ENCODE measurements at regions of chr22 and their contacts with region 1.

Region 1: DNA sequence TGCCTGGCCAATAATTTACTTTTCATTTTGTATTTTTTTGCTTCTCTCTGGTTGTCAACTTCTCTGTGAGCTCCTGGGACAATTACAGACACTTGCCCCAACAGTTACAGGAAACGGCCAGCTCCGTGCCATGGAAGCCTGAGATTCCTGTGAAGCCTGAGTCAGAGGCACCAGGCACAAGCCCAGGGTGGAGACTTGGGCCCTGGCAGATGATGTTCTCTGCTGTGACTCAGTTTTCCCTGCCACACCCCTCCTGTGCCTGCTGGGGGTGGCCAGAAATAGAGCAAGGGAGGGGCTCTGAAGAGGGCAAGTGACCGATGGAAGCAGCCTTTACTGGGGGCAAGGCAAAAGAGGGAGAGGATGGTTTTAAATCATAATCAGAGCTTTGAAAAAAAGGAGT is 4.9 kb downstream of the ATP5MGL start:
- DNase-seq: no peak
- H3K4me3 ChIP-seq: no peak overlapping the region
- H3K27ac ChIP-seq: peak overlapping the region; percentile 65
- H3K27me3 ChIP-seq: no peaks in the 10 kb centered on the region
- CTCF ChIP-seq: no peak

Region 2: GRCh38 chr22:42511401-42511891 is 124.1 kb before region 1 on chr22:
- CTCF ChIA-PET with region 1: no interaction called
- POLR2A ChIA-PET with region 1: no interaction called
- DNase-seq: no peak
- H3K4me3 ChIP-seq: no peak overlapping the region
- H3K27ac ChIP-seq: no peak overlapping the region
- H3K27me3 ChIP-seq: no peaks in the 10 kb centered on the region
- CTCF ChIP-seq: no peak

Region 3: DNA sequence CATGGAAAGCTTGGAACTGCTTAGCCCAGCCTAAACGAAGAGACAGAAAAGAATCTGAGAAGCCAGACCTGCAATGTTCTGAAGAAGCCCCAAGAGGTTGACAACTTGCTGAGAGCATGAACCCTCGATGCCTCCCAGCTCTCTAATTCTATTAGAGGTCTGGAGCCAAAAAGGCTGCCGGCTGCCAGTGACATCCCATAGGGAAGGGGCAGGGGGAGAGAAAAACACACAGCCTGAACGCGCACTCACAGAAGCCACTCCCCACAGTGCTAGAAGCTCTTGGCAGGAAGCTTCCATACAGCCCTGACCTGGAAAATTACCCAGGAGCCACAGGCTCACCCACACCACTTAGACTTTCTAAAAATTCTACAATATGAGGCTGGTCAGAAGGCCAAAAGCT is 39.2 kb before region 1 on chr22:
- CTCF ChIA-PET with region 1: no interaction called
- POLR2A ChIA-PET with region 1: no interaction called
- DNase-seq: no peak
- H3K4me3 ChIP-seq: no peak overlapping the region
- H3K27ac ChIP-seq: no peak overlapping the region
- H3K27me3 ChIP-seq: no peaks in the 10 kb centered on the region
- CTCF ChIP-seq: no peak

Region 4: DNA sequence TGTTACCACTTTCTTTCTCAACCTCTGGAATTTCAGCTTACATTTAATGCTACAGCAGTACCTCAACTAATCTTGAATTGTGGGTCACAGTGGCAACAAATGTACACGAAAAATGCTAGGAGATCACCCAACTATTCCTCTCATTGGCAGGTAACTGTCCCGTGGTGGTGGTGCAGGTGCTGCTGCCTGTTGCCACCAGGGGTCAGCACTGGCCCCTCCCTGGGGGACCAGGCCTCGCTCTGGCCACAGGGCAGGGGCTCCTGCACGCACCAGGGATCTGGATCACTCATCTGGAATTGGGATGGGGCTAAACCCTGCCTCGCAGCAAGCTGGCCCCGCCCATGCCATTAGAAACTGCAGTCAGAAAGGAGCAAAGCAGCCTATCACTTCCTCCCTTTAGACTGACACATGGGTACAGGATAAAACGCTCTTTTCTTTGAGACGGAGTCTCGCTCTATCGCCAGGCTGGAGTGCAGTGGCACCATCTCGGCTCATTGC is 14.0 kb before region 1 on chr22:
- CTCF ChIA-PET with region 1: interaction called, 11 read pairs
- POLR2A ChIA-PET with region 1: interaction called, 3 read pairs
- DNase-seq: no peak
- H3K4me3 ChIP-seq: no peak overlapping the region
- H3K27ac ChIP-seq: no peak overlapping the region
- H3K27me3 ChIP-seq: no peaks in the 10 kb centered on the region
- CTCF ChIP-seq: peak; percentile 92

Region 5: DNA sequence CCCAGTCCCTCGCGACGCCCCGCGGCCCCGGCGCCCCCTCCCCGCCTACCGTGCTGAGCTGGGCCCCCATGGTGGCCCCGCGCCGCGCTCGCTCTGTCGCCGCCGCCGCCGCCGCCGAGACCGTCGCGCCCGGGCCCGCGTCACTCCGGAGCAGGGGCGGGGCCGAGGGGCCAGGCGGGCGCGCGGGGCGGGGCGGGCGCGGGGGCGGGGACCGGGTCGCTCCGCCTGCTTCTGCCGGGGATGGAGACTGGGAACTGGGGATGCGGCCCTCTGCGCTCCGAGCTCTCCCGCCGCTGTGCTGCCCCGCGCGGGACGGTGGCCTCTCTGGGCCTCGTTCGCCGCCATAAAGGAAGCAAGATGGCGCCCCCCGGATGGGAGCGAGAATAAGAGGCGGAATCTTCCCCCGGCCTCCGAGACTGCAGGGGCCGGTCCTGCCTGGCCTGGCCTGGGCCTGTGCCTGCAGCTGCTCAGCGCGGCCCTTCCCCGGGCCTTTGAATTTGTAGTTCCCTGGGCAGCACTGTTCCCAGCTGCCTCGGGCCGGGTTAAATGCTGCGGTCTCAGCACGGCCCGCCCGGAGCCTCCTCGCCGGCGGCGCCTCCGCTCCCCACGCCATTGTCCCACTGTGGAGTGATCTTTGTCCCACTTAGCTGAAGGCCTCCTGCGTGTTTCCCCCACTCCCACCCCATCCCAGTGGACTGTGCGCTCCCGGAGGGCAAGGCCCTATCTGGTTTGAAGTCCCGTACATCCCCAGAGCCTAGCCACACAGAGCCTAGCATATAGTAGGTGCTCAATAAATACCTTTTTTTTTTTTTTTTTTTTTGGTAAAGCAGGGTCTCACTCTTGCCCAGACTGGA is 13.9 kb after region 1 on chr22 and contains the start of gene CYB5R3:
- CTCF ChIA-PET with region 1: interaction called, 12 read pairs
- POLR2A ChIA-PET with region 1: interaction called, 5 read pairs
- DNase-seq: no peak
- H3K4me3 ChIP-seq: peak within 1 kb of the TSS; percentile 88
- H3K27ac ChIP-seq: peak within 1 kb of the TSS; percentile 65
- H3K27me3 ChIP-seq: no peaks in the 10 kb centered on the region
- CTCF ChIP-seq: no peak
- polyA plus RNA-seq, gene CYB5R3: 110 and 151 TPM in 2 replicates

Region 6: DNA sequence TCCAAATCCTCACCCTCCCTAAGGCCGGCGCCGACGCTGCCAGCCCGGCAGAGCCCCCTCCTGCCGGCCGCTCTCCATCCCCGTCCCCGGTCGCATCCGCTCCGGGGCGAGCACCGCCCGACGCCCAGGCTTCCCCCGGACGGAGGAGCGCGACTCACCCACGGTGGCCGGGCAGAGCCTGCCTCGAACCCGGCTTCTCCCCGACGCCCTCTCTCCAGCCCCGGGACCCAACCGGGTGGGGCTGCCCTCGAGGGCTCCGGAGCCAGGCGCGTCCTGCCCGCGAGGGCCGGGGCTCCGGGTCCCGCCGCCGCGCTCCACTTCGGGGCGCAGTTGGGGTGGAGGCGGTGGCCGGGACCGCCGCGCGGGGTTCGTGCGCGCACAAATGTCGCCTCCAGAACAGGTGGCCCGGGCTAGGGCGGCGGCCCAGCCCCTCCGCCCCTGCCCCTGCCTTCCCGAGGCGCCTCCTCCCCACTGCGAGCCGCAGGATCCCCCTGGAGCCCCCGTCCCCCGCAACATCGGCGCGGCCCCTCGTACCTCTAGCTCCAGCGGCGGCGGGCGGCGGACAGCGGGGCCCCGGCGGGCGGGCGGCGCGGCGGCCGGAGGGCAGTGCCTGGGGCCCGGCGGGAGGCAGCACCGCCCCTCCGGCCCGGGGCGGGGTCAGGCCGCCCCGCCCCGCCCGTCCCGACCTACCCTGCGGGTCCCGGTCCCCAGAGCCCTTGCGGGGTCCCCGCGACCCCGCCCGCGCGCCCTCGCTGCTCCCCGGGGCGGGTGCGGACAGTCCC is 84.9 kb after region 1 on chr22 and contains the start of gene A4GALT:
- CTCF ChIA-PET with region 1: no interaction called
- POLR2A ChIA-PET with region 1: interaction called, 10 read pairs
- DNase-seq: no peak
- H3K4me3 ChIP-seq: peak within 1 kb of the TSS; percentile 63
- H3K27ac ChIP-seq: no peak within 1 kb of the TSS
- H3K27me3 ChIP-seq: peaks cover 6% of the 10 kb centered on the region
- CTCF ChIP-seq: no peak
- polyA plus RNA-seq, gene A4GALT: 1.8 and 2.7 TPM in 2 replicates

Region 7: DNA sequence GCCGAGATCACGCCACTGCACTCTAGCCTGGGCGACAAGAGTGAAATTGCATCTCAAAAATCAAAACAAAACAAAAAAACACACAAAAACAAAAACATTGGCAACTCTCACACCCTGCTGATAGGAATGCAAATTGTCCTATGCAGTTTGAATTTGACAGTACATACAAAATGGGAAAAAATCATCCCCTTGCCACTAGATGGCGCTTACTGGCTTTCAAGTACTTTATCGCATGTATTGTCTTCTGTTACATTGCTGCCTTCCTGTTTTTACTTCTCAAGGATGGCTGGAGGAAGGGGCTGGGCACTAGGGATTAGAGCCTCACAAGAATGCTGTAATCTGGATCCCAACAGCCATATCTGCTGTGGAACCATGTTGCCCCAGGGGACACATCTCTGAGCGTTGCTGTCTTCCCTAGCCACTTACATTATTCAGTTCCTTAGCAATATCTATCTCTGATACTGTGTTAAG is 144.6 kb after region 1 on chr22:
- CTCF ChIA-PET with region 1: interaction called, 12 read pairs
- POLR2A ChIA-PET with region 1: no interaction called
- DNase-seq: peak; percentile 90
- H3K4me3 ChIP-seq: no peak overlapping the region
- H3K27ac ChIP-seq: peak overlapping the region; percentile 31
- H3K27me3 ChIP-seq: no peaks in the 10 kb centered on the region
- CTCF ChIP-seq: peak; percentile 92

Region 8: DNA sequence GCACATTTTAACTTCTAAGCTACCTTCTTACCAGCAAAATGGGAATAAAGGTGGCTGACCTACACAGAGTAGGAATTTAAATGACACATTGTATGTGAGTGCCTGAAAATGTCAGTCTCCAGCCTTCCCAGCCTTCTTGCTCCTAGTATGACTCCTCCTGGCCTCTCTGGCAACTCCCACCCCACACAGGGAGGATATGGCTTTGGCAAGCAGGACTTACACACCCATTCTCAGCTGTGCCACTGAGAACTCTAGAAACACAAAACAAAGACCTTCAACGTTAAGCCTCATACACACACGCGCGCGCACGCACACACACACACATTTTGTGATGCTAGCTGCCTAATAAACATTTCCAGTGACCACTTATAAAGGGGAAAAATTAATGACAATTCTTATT is 313.6 kb after region 1 on chr22:
- CTCF ChIA-PET with region 1: no interaction called
- POLR2A ChIA-PET with region 1: no interaction called
- DNase-seq: no peak
- H3K4me3 ChIP-seq: no peak overlapping the region
- H3K27ac ChIP-seq: no peak overlapping the region
- H3K27me3 ChIP-seq: no peaks in the 10 kb centered on the region
- CTCF ChIP-seq: no peak